ENCODE measurements at regions of chr4 and their contacts with region 1.

Region 1: GRCh38 chr4:26410385-26411293 is 79.6 kb downstream of the CCKAR start:
- DNase-seq: no peak
- ATAC-seq: peak; percentile 74
- H3K4me3 ChIP-seq: no peak overlapping the region
- H3K27ac ChIP-seq: no peak overlapping the region
- H3K4me1 ChIP-seq: no peaks in the 10 kb centered on the region
- H3K27me3 ChIP-seq: no peaks in the 10 kb centered on the region
- CTCF ChIP-seq: peak; percentile 50 to 75 (median 71); a peak in 5 of 6 replicates
- POLR2A ChIP-seq: no peak
- RAD21 ChIP-seq: peak; percentile 79

Region 2: DNA sequence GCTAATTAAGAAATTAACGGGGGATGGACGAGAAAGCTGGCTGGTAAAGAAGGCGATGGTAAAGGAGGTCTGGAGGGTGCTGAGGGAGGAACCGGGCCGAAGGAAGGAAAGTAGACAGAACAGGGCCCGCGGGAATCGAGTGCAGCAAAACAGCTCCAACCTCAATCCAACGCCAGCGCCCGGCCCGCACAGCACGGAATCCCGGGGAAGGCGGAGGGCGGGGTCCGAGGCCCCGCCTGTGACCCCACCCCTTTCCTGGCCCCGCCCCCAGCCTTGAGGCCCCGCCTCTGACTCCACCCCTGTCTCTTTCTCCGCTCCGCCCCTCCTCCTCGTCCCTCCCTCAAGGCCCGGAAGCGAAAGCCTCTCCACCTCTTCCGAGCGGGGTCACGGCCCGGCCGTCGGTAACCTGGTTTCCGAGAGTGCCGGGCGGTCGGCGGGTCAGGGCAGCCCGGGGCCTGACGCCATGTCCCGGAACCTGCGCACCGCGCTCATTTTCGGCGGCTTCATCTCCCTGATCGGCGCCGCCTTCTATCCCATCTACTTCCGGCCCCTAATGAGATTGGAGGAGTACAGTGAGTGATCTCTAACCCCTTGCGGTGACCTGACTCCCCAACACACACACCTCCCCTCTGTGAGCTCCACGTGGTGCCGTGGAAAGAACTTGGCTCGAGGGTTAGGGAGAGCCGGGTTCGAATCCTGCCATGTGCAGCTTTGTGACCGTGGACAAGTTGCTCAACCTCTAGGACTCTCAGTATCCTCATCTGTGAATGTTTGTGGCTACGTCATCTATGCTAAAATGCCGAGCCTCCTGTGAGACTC is 496.6 kb before region 1 on chr4 and contains the start of gene SMIM20:
- CTCF ChIA-PET with region 1: no interaction called
- POLR2A ChIA-PET with region 1: no interaction called
- RAD21 ChIA-PET with region 1: no interaction called
- intact Hi-C with region 1: no loop called
- DNase-seq: peak; percentile 78
- ATAC-seq: peak; percentile 97
- H3K4me3 ChIP-seq: peak within 1 kb of the TSS; percentile 61 to 93
- H3K27ac ChIP-seq: peak within 1 kb of the TSS; percentile 83
- H3K4me1 ChIP-seq: peaks cover 7 to 26% of the 10 kb centered on the region in 2 experiments; a peak in 3 of 4 replicates
- H3K27me3 ChIP-seq: no peaks in the 10 kb centered on the region
- CTCF ChIP-seq: no peak
- POLR2A ChIP-seq: peak; percentile 52
- RAD21 ChIP-seq: no peak
- total RNA-seq, gene SMIM20: 36.9 TPM

Region 3: DNA sequence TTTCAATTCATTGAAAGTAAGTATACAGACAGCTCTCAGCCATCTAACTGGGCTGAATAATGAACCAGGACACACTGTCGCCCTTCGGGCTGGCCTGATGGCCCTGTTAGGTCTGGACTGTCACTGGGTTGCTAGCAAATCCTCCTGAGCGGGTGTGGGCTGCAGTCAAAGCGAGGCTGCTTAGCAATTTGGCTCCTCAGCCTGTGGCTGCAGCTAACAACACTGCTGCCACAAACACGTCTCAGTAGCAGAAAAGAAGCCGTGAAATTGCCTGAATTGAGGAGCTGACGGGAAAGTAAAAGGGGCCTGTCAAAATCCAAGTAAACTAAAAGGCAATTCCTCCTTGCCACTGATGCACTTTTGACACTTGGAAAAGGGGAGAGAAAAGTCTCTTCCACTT is 423.8 kb before region 1 on chr4:
- CTCF ChIA-PET with region 1: interaction called, 6 read pairs
- POLR2A ChIA-PET with region 1: no interaction called
- RAD21 ChIA-PET with region 1: no interaction called
- intact Hi-C with region 1: loop called (anchors 5 kb)
- DNase-seq: no peak
- ATAC-seq: no peak
- H3K4me3 ChIP-seq: no peak overlapping the region
- H3K27ac ChIP-seq: no peak overlapping the region
- H3K4me1 ChIP-seq: peaks cover 0 to 6% of the 10 kb centered on the region in 2 experiments; a peak in 1 of 4 replicates
- H3K27me3 ChIP-seq: no peaks in the 10 kb centered on the region
- CTCF ChIP-seq: no peak
- POLR2A ChIP-seq: no peak
- RAD21 ChIP-seq: no peak

Region 4: DNA sequence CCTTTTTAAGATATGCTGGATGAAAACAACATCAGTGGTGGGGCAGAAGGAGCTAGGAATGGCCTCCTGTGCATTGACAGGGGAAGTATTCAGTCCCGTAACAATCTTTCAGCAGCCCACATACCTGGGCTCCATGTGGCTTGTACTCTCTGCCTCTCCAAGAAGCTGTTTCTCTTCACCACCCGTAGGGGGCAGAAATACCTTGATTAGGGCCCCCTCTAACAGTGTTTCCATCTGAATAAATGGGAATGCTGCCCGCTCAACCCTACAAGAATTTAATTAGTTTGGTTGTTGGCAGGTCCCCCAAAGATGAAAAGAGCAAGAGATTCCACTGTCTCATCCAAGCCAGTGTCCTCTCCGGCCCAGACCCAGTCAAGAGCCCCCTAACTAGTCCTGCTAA is 341.4 kb before region 1 on chr4:
- CTCF ChIA-PET with region 1: interaction called, 11 read pairs
- POLR2A ChIA-PET with region 1: no interaction called
- RAD21 ChIA-PET with region 1: no interaction called
- intact Hi-C with region 1: loop called (anchors 1 kb)
- DNase-seq: no peak
- ATAC-seq: peak; percentile 91
- H3K4me3 ChIP-seq: no peak overlapping the region
- H3K27ac ChIP-seq: no peak overlapping the region
- H3K4me1 ChIP-seq: peaks cover 0 to 10% of the 10 kb centered on the region in 2 experiments; a peak in 1 of 4 replicates
- H3K27me3 ChIP-seq: no peaks in the 10 kb centered on the region
- CTCF ChIP-seq: peak; percentile 42 to 71 (median 65); a peak in 5 of 6 replicates
- POLR2A ChIP-seq: no peak
- RAD21 ChIP-seq: peak; percentile 75

Region 5: GRCh38 chr4:26325191-26325590 is 85.4 kb before region 1 on chr4:
- CTCF ChIA-PET with region 1: interaction called, 29 read pairs
- POLR2A ChIA-PET with region 1: no interaction called
- RAD21 ChIA-PET with region 1: no interaction called
- intact Hi-C with region 1: loop called (anchors 5 kb)
- DNase-seq: peak; percentile 35
- ATAC-seq: 0 out of 2 replicates have a peak, but pooled peaks have one; percentile 21
- H3K4me3 ChIP-seq: no peak overlapping the region
- H3K27ac ChIP-seq: no peak overlapping the region
- H3K4me1 ChIP-seq: peaks cover 4 to 28% of the 10 kb centered on the region in 2 experiments; a peak in 3 of 4 replicates
- H3K27me3 ChIP-seq: no peaks in the 10 kb centered on the region
- CTCF ChIP-seq: peak in 2 of 3 experiments; percentile 50 to 52; a peak in 4 of 6 replicates
- POLR2A ChIP-seq: no peak
- RAD21 ChIP-seq: no peak

Region 6: GRCh38 chr4:27010334-27010940 is 599.8 kb after region 1 on chr4:
- CTCF ChIA-PET with region 1: no interaction called
- POLR2A ChIA-PET with region 1: no interaction called
- RAD21 ChIA-PET with region 1: no interaction called
- intact Hi-C with region 1: loop called (anchors 10 kb)
- DNase-seq: peak; percentile 43
- ATAC-seq: peak; percentile 90
- H3K4me3 ChIP-seq: no peak overlapping the region
- H3K27ac ChIP-seq: no peak overlapping the region
- H3K4me1 ChIP-seq: peaks cover 0 to 1% of the 10 kb centered on the region in 2 experiments; a peak in 1 of 4 replicates
- H3K27me3 ChIP-seq: no peaks in the 10 kb centered on the region
- CTCF ChIP-seq: peak; percentile 50 to 81 (median 77)
- POLR2A ChIP-seq: no peak
- RAD21 ChIP-seq: peak; percentile 85